CD8-positive, alpha-beta memory T cell (primary cell): ENCODE measurements at regions of chr7 and their contacts with region 1.

Region 1: DNA sequence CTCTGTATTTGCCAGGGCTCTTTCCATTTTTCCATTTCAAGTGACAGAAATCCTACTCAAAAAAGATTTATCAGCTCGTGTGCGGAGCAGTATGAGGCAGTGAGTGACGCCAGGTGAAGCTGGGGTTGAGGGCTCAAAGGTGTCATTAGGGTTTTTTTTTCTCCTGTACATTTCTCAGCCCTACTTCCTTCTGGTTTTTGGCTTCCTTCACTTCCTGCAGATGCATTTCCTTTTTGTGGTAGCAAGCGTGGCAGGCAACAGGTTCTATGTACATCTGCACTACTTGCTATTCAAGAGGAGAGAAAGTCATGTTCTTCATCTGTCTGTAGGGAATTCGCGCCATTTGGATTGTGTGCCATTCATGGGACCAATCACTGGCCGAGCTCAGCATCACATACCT is 52.8 kb upstream of the AOAH start:
- DNase-seq: peak; percentile 25 to 88 (median 72)
- H3K4me3 ChIP-seq: peak overlapping the region; percentile 44
- H3K4me3 Mint-ChIP-seq: peak overlapping the region; percentile 71 to 87 (median 84)
- H3K27ac ChIP-seq: no peak overlapping the region
- H3K27ac Mint-ChIP-seq: peak overlapping the region; percentile 81 to 100 (median 96)
- H3K4me1 ChIP-seq: peaks cover 78% of the 10 kb centered on the region
- H3K4me1 Mint-ChIP-seq: peaks cover 79 to 90% (median 88%) of the 10 kb centered on the region in 3 donors
- H3K27me3 ChIP-seq: no peaks in the 10 kb centered on the region
- H3K27me3 Mint-ChIP-seq: peaks cover 0 to 3% of the 10 kb centered on the region in 2 donors

Region 2: GRCh38 chr7:36752026-36752711 is 24.9 kb before region 1 on chr7:
- CTCF ChIA-PET with region 1: no interaction called
- POLR2A ChIA-PET with region 1: no interaction called
- DNase-seq: no peak
- H3K4me3 ChIP-seq: no peak overlapping the region
- H3K4me3 Mint-ChIP-seq: no peak overlapping the region
- H3K27ac ChIP-seq: no peak overlapping the region
- H3K27ac Mint-ChIP-seq: peak overlapping the region in 4 of 8 donors; percentile 38 to 77 (median 66)
- H3K4me1 ChIP-seq: no peaks in the 10 kb centered on the region
- H3K4me1 Mint-ChIP-seq: peaks cover 32 to 47% (median 35%) of the 10 kb centered on the region in 3 donors
- H3K27me3 ChIP-seq: no peaks in the 10 kb centered on the region
- H3K27me3 Mint-ChIP-seq: peaks cover 0 to 2% of the 10 kb centered on the region in 2 donors

Region 3: DNA sequence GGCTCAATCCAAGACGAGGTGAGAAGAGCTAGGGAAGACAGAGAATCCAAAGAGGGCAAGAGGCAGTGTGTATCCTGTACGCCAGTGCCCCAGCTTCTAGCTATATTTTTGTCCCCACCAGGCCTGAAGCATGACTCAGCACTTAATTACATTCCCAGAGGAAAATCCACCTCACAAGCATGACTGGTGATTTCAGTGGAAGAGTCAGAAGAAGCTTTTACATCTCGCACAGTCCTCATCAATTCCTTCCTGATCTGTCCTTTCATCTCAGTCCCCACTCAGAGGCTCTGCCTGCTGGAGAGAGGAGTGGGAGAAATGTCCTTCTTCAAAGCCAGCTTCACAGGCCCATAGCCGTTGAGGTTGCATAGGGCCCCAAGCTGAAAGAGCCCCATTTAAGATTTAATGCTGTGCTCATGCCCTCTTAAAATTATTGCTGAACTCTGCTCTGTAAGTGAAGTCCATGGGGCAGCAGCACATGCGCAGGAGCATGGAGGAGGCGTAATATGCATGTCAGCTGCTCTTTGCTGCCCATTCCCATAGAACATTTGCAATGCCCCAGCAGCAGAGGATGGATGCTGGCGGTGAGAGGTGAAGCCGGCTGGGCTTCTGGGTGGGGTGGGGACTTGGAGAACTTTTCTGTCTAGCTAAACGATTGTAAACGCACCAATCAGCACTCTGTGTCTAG is 13.8 kb before region 1 on chr7:
- CTCF ChIA-PET with region 1: interaction called, 3 read pairs
- POLR2A ChIA-PET with region 1: interaction called, 14 read pairs
- DNase-seq: no peak
- H3K4me3 ChIP-seq: no peak overlapping the region
- H3K4me3 Mint-ChIP-seq: no peak overlapping the region
- H3K27ac ChIP-seq: no peak overlapping the region
- H3K27ac Mint-ChIP-seq: peak overlapping the region in 3 of 8 donors; percentile 5 to 56 (median 56)
- H3K4me1 ChIP-seq: peaks cover 8% of the 10 kb centered on the region
- H3K4me1 Mint-ChIP-seq: peaks cover 20 to 39% (median 29%) of the 10 kb centered on the region in 3 donors
- H3K27me3 ChIP-seq: no peaks in the 10 kb centered on the region
- H3K27me3 Mint-ChIP-seq: peaks cover 0 to 1% of the 10 kb centered on the region in 2 donors